ENCODE measurements at regions of chr10 and their contacts with region 1.

Region 1: GRCh38 chr10:88932539-88933256 is 19.9 kb downstream of the ACTA2 start:
- DNase-seq: peak; percentile 37
- H3K4me3 Mint-ChIP-seq: no peak overlapping the region
- H3K27ac Mint-ChIP-seq: no peak overlapping the region
- H3K4me1 Mint-ChIP-seq: peaks cover 21% of the 10 kb centered on the region
- H3K27me3 Mint-ChIP-seq: no peaks in the 10 kb centered on the region

Region 2: GRCh38 chr10:88835096-88835909 is 97.4 kb before region 1 on chr10:
- CTCF ChIA-PET with region 1: interaction called, 211 read pairs
- POLR2A ChIA-PET with region 1: interaction called, 29 read pairs
- DNase-seq: peak; percentile 91
- H3K4me3 Mint-ChIP-seq: no peak overlapping the region
- H3K27ac Mint-ChIP-seq: no peak overlapping the region
- H3K4me1 Mint-ChIP-seq: peaks cover 32% of the 10 kb centered on the region
- H3K27me3 Mint-ChIP-seq: no peaks in the 10 kb centered on the region

Region 3: DNA sequence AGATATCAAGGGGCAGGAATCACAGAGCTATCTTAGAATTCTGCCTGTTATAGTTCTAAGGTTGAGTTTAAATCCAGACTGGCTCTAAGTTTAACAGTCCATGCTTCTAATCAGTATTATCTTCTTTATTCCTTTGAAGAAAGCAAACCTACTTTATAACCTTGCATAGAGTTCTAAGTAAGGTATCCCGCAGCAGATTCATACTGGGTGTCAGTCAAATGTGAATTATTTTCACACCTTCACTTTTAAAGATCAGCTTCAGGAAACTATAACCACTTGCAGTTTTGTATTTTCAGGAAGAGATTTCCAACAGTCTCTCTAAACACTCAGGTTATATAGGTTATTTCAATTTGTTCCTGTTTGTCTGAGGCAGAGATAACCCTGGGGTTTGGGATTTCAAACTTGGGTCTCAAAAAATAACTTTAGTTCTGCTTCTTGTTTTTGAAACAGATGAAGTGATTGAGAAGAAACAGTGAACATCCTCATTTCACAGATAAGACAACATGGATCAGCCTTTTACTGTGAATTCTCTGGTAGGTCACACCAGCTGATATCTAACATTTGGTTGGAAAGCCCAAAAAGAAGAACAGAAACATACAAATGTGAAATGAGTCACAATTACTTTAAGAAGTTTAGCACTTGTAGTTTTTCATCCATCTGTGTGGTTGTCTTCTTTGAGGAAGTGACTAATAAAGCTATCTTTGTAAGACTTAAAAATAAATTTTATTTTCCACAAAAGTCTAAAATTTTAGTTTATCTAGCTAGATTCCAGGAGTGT is 31.3 kb before region 1 on chr10:
- CTCF ChIA-PET with region 1: interaction called, 32 read pairs
- POLR2A ChIA-PET with region 1: no interaction called
- DNase-seq: no peak
- H3K4me3 Mint-ChIP-seq: no peak overlapping the region
- H3K27ac Mint-ChIP-seq: peak overlapping the region; percentile 36
- H3K4me1 Mint-ChIP-seq: peaks cover 48% of the 10 kb centered on the region
- H3K27me3 Mint-ChIP-seq: no peaks in the 10 kb centered on the region

Region 4: GRCh38 chr10:88990384-88991160 is 57.9 kb after region 1 on chr10 and contains the start of gene FAS:
- CTCF ChIA-PET with region 1: interaction called, 63 read pairs
- POLR2A ChIA-PET with region 1: interaction called, 5 read pairs
- DNase-seq: peak; percentile 86
- H3K4me3 Mint-ChIP-seq: peak within 1 kb of the TSS; percentile 99
- H3K27ac Mint-ChIP-seq: peak within 1 kb of the TSS; percentile 99
- H3K4me1 Mint-ChIP-seq: peaks cover 71% of the 10 kb centered on the region
- H3K27me3 Mint-ChIP-seq: no peaks in the 10 kb centered on the region
- total RNA-seq, gene FAS: 91.1 to 96.4 TPM

Region 5: GRCh38 chr10:89007129-89007893 is 74.6 kb after region 1 on chr10:
- CTCF ChIA-PET with region 1: interaction called, 11 read pairs
- POLR2A ChIA-PET with region 1: no interaction called
- DNase-seq: no peak
- H3K4me3 Mint-ChIP-seq: no peak overlapping the region
- H3K27ac Mint-ChIP-seq: no peak overlapping the region
- H3K4me1 Mint-ChIP-seq: peaks cover 41% of the 10 kb centered on the region
- H3K27me3 Mint-ChIP-seq: no peaks in the 10 kb centered on the region

Region 6: GRCh38 chr10:89207181-89207800 is 274.6 kb after region 1 on chr10 and contains the start of gene CH25H:
- CTCF ChIA-PET with region 1: interaction called, 16 read pairs
- POLR2A ChIA-PET with region 1: interaction called, 3 read pairs
- DNase-seq: peak; percentile 42
- H3K4me3 Mint-ChIP-seq: peak within 1 kb of the TSS; percentile 71
- H3K27ac Mint-ChIP-seq: peak within 1 kb of the TSS; percentile 2
- H3K4me1 Mint-ChIP-seq: peaks cover 22% of the 10 kb centered on the region
- H3K27me3 Mint-ChIP-seq: peaks cover 32% of the 10 kb centered on the region
- total RNA-seq, gene CH25H: not detected

Measured in activated CD4-positive, alpha-beta memory T cell treated with anti-CD3 and anti-CD28 coated beads, Interleukin-2, amount 10 ng/mL, durations not matched to agents 7 days and 5 days (primary cell).